Gastrocnemius medialis (tissue), 4 donors: ENCODE measurements at regions of chr6 and their contacts with region 1.

Region 1: GRCh38 chr6:100099189-100100074 is 105.4 kb upstream of the MCHR2 start:
- DNase-seq: no peak
- ATAC-seq: peak; percentile 66 to 75
- H3K4me3 ChIP-seq: no peak overlapping the region
- H3K27ac ChIP-seq: no peak overlapping the region
- H3K4me1 ChIP-seq: no peaks in the 10 kb centered on the region
- H3K27me3 ChIP-seq: no peaks in the 10 kb centered on the region
- CTCF ChIP-seq: peak; percentile 50 to 70 (median 55)
- POLR2A ChIP-seq: no peak

Region 2: GRCh38 chr6:100078509-100078908 is 20.9 kb before region 1 on chr6:
- in situ Hi-C with region 1: no loop called
- intact Hi-C with region 1: loop called (anchors 1 kb)
- DNase-seq: peak; percentile 69 to 83
- ATAC-seq: peak; percentile 98
- H3K4me3 ChIP-seq: no peak overlapping the region
- H3K27ac ChIP-seq: peak overlapping the region; percentile 33 to 64 (median 60)
- H3K4me1 ChIP-seq: peaks cover 3 to 20% of the 10 kb centered on the region in 2 donors
- H3K27me3 ChIP-seq: no peaks in the 10 kb centered on the region
- CTCF ChIP-seq: peak in 3 of 5 experiments; percentile 34 to 43 (median 36)
- POLR2A ChIP-seq: no peak